Panc1 (cell line): ENCODE measurements at regions of chr20 and their contacts with region 1.

Region 1: DNA sequence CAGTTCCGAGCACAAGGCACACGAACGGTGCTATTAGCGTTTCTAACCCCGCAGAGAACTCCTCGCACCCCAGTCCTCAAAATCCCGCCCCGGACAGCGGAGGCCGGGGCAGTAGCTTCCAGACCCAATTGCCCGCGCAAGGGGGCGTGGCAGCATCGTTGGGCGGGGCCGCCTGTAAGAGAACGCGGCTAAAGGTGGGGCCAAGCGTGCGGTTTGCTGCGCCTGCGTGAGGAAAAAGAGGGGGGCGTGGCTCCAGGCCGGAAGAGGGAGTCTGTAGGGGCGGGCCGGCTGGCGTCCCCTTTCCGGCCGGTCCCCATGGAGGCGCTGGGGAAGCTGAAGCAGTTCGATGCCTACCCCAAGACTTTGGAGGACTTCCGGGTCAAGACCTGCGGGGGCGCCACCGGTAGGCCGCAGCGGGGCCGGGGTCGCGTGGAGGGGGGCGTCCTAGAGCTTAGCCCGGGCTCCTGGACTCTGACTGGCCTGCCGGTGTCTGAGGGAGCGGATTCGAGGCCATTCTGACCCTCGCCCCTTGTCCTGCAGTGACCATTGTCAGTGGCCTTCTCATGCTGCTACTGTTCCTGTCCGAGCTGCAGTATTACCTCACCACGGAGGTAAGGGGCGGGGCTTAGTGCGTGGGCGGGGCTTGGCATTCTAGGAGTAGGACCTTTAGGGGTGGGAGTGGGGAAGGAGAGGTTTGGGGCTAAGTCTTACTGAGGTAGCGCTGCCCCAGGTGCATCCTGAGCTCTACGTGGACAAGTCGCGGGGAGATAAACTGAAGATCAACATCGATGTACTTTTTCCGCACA is at the start of gene ERGIC3:
- DNase-seq: peak; percentile 73
- ATAC-seq: peak; percentile 99
- H3K4me3 ChIP-seq: peak within 1 kb of the TSS; percentile 72 to 77
- H3K27ac ChIP-seq: peak within 1 kb of the TSS; percentile 85
- H3K4me1 ChIP-seq: no peaks in the 10 kb centered on the region
- H3K27me3 ChIP-seq: no peaks in the 10 kb centered on the region
- CTCF ChIP-seq: no peak
- total RNA-seq, gene ERGIC3: 265 TPM

Region 2: DNA sequence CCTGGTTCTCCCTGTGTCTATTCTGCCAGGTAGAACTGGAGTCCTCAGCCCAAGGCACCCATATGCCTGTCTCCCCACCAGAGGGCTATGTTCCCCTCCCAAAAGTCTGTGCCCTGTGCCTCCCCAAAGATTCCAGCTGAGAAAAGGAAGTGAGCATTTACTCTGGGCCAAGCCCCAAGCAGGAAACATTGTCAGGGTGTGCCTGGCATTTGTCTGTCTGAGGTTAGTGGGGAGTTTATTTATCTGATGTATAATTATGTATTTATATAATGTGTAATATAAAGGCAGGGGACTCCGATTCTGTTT is 109.6 kb before region 1 on chr20:
- CTCF ChIA-PET with region 1: no interaction called
- POLR2A ChIA-PET with region 1: no interaction called
- in situ Hi-C with region 1: no loop called
- intact Hi-C with region 1: no loop called
- DNase-seq: no peak
- ATAC-seq: no peak
- H3K4me3 ChIP-seq: no peak overlapping the region
- H3K27ac ChIP-seq: no peak overlapping the region
- H3K4me1 ChIP-seq: no peaks in the 10 kb centered on the region
- H3K27me3 ChIP-seq: no peaks in the 10 kb centered on the region
- CTCF ChIP-seq: no peak

Region 3: DNA sequence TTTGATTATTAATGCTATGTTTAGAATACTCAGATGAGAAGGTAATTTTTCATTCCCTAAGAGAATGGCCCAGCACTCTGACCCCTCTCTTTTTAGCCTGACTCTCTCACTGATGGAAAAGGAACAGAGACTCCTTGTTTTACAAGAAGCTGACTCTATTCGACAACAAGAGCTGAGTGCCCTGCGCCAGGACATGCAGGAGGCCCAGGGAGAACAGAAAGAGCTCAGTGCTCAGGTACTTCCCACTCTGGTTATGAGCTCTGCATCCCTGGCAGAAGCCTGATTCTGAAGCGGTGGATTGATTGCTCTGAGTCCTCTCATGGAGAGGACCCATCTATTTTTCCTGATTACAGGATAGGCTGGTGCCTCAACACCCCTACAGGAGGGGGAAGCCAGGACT is 45.5 kb before region 1 on chr20:
- CTCF ChIA-PET with region 1: no interaction called
- POLR2A ChIA-PET with region 1: no interaction called
- in situ Hi-C with region 1: no loop called
- intact Hi-C with region 1: no loop called
- DNase-seq: no peak
- ATAC-seq: no peak
- H3K4me3 ChIP-seq: no peak overlapping the region
- H3K27ac ChIP-seq: no peak overlapping the region
- H3K4me1 ChIP-seq: no peaks in the 10 kb centered on the region
- H3K27me3 ChIP-seq: no peaks in the 10 kb centered on the region
- CTCF ChIP-seq: no peak

Region 4: DNA sequence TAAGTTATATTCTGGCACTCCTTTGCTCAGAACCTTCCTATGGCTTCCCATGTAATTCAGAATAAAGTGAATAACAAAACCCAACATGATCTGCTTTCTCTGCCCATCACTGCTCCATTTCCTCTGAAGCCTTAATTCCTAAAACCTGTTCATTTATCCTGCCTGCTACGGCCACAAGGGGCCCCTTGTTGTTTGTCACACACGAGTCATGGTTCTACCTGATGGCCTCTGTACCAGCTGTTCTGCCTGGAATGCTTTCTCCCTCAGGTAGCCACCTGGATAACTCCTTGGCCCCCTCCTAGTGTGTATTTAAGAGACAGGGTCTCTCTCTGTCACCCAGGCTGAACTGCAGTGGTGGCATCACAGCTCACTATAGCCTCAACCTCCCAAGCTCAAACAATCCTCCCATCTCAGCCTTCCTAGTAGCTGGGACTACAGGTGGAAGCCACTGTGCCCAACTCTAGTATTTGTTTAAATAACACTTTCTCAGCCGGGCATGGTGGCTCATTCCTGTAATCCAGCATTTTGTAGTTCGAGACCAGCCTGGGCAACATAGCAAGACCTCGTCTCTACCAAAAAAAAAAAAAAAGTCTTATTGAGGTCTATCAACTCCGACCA is 26.8 kb after region 1 on chr20:
- CTCF ChIA-PET with region 1: no interaction called
- POLR2A ChIA-PET with region 1: interaction called, 15 read pairs
- in situ Hi-C with region 1: no loop called
- intact Hi-C with region 1: no loop called
- DNase-seq: no peak
- ATAC-seq: peak; percentile 82
- H3K4me3 ChIP-seq: no peak overlapping the region
- H3K27ac ChIP-seq: no peak overlapping the region
- H3K4me1 ChIP-seq: no peaks in the 10 kb centered on the region
- H3K27me3 ChIP-seq: no peaks in the 10 kb centered on the region
- CTCF ChIP-seq: no peak